H1 (cell line): ENCODE measurements at regions of chr11 and their contacts with region 1.

Region 1: DNA sequence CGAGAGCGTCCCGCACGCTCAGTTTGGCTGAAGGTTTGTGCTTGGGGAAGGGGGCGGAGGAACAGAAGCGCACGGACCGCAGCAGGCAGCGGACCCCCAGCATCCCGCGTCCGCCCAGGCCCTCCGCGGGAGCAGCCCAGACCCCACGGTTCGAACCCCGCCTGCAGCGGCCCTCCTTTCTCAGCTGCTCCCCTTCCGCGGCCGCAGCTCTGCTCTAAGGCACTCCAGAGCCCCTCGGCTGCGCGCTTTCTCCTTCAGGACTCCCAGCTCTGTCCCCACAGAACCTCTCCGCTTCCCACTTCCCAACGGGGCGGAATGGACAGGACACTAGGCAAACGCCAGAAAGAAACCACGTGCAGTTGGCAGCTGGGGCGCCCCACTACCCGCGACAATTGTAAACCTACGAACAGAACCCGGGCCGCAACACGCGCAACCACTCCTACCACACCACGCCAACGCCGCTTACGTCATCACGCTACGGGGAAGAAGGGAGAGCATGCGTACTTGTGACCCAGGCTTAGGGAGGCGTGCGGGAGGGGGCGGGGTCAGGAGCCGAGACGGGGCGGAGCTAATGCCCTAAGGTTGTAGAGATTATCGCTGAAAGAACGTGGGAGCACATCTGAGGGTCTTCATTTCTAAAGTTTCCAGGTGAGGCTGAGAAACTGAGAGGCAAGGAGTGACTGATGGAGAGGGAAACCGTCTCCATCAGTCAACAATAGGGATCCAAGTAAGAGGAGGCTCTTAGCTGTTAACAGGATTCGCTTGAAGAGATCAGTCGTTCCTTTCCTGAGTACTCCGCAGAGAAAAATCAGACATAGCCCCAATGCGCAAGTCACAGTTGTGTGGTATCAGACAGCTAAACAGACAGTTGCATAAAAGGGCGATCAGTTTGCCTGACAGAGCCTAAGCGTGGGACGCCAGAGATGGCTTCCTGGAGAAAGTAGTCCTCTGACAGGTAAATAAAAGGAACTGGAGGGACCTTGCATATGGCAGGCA is at the start of gene NARS2:
- DNase-seq: peak; percentile 87 to 96
- H3K4me3 ChIP-seq: peak within 1 kb of the TSS; percentile 88 to 93 (median 91)
- H3K27ac ChIP-seq: peak within 1 kb of the TSS; percentile 87
- H3K4me1 ChIP-seq: no peaks in the 10 kb centered on the region; a peak in 2 of 7 replicates
- H3K27me3 ChIP-seq: no peaks in the 10 kb centered on the region
- CTCF ChIP-seq: no peak
- EP300 ChIP-seq: no peak
- POLR2A ChIP-seq: peak; percentile 21 to 80
- RAD21 ChIP-seq: no peak
- total RNA-seq, gene NARS2: 46.7 and 51.6 TPM in 2 replicates

Region 2: DNA sequence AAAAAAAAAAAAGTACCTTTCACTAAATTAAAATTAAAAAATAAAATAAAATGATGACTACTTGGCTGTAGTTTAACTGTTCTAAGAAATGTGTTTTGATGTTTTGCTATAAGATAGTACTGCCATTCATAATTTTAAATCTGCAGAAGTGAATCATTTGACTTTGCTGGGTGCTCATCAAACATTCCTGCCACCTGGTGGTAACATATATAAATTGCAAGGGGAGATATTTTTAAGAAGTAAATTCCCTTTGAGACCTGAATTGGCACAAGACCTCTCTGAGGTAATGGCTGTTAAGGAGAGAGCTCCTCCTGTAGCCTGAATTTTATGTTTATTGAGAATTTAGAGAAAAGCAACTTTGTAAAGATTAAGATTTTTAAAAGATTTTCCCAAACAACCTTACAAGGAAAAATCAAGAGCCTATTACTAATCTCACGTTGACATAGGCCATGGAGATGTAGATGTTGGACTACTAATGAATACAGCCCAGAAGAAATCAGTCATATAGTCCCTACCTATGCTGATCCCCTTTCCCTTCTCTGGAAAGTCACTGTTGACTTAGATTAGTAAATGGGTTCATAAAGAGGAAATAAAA is 11.9 kb after region 1 on chr11:
- CTCF ChIA-PET with region 1: interaction called, 33 read pairs
- POLR2A ChIA-PET with region 1: interaction called, 3 read pairs
- DNase-seq: no peak
- H3K4me3 ChIP-seq: no peak overlapping the region
- H3K27ac ChIP-seq: no peak overlapping the region
- H3K4me1 ChIP-seq: no peaks in the 10 kb centered on the region
- H3K27me3 ChIP-seq: no peaks in the 10 kb centered on the region
- CTCF ChIP-seq: peak in 1 of 3 experiments; percentile 47; a peak in 2 of 4 replicates
- EP300 ChIP-seq: no peak
- POLR2A ChIP-seq: no peak
- RAD21 ChIP-seq: peak; percentile 35 to 45; a peak in 3 of 4 replicates